ENCODE measurements at regions of chr2 and their contacts with region 1.

Region 1: DNA sequence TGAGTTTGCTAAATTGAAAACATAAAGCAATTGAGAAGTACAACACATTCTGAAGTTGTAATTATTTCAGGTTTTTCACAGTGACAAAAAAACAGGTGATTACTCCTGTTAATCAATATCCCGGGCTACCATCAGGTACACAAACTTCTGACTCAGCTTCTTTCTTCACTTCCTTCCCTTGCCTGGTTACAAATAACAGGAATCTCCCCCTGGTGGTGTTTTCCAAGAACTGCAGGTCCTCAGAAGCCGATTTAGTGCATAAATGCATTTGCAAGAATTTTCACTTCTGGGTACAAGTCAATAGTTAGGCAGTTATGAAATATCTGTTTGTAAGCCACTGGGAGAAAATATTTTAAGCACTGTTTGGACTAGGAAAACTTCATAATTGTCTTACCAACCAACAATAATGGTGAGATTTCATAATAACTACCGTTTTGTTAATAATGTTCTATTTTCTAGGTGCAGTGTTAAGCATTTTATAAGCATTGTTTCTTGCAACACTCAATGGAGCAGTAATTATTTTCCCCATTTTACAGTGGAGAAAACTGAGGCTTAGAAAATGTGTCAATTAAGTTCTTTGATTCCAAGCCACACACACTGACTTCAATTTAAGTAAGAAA is 12.4 kb upstream of the GMCL1 start:
- DNase-seq: peak in 1 of 2 donors; percentile 82
- ATAC-seq: peak in 7 of 8 donors; percentile 47 to 83 (median 65)
- H3K4me3 ChIP-seq: no peak overlapping the region
- H3K27ac ChIP-seq: peak overlapping the region in 1 of 10 donors; percentile 11
- H3K4me1 ChIP-seq: peaks cover 0 to 26% (median 0%) of the 10 kb centered on the region in 9 donors
- H3K27me3 ChIP-seq: no peaks in the 10 kb centered on the region
- CTCF ChIP-seq: peak; percentile 84 to 95 (median 92)

Region 2: GRCh38 chr2:69559442-69560146 is 257.4 kb before region 1 on chr2:
- intact Hi-C with region 1: loop called in 7 of 10 experiments (anchors 5 to 10 kb)
- DNase-seq: no peak
- ATAC-seq: peak; percentile 71 to 84 (median 76)
- H3K4me3 ChIP-seq: no peak overlapping the region
- H3K27ac ChIP-seq: peak overlapping the region in 2 of 10 donors; percentile 4 to 10
- H3K4me1 ChIP-seq: peaks cover 11 to 76% (median 44%) of the 10 kb centered on the region in 9 donors
- H3K27me3 ChIP-seq: no peaks in the 10 kb centered on the region
- CTCF ChIP-seq: peak in 8 of 9 donors; percentile 44 to 81 (median 72)

Region 3: GRCh38 chr2:69565431-69565839 is 251.6 kb before region 1 on chr2:
- intact Hi-C with region 1: loop called in 1 of 10 experiments (anchors 10 kb)
- DNase-seq: peak; percentile 48 to 58
- ATAC-seq: peak; percentile 33 to 66 (median 50)
- H3K4me3 ChIP-seq: no peak overlapping the region
- H3K27ac ChIP-seq: peak overlapping the region in 2 of 10 donors; percentile 30 to 50
- H3K4me1 ChIP-seq: peaks cover 9 to 88% (median 50%) of the 10 kb centered on the region in 9 donors
- H3K27me3 ChIP-seq: no peaks in the 10 kb centered on the region
- CTCF ChIP-seq: peak; percentile 24 to 88 (median 72)

Region 4: DNA sequence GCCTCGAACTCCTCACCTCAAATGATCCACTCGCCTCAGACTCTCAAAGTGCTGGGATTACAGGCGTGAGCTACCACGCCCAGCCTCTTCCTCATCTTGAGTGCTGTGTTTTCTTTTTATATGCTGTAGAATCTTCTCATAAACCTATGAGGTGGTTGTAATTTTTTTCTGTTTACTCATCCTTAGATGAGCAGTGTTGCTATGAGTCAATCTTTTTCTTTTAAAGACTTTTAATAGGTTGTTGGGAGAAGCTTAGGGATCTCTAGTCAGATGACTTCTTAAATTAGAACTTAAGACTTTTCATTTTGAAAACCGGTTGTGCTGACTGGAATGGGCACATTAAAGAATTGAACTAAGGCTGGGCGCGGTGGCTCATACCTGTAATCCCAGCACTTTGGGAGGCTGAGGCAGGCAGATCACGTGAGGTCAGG is 164.8 kb before region 1 on chr2:
- intact Hi-C with region 1: no loop called
- DNase-seq: no peak
- ATAC-seq: no peak
- H3K4me3 ChIP-seq: no peak overlapping the region
- H3K27ac ChIP-seq: no peak overlapping the region
- H3K4me1 ChIP-seq: peaks cover 0 to 21% (median 0%) of the 10 kb centered on the region in 9 donors
- H3K27me3 ChIP-seq: no peaks in the 10 kb centered on the region
- CTCF ChIP-seq: no peak

Region 5: GRCh38 chr2:69724540-69725159 is 92.4 kb before region 1 on chr2:
- intact Hi-C with region 1: loop called (anchors 1 to 5 kb)
- DNase-seq: peak; percentile 82 to 84
- ATAC-seq: peak; percentile 72 to 92 (median 88)
- H3K4me3 ChIP-seq: peak overlapping the region in 7 of 10 donors; percentile 24 to 49 (median 37)
- H3K27ac ChIP-seq: no peak overlapping the region
- H3K4me1 ChIP-seq: peaks cover 0 to 8% (median 0%) of the 10 kb centered on the region in 9 donors
- H3K27me3 ChIP-seq: no peaks in the 10 kb centered on the region
- CTCF ChIP-seq: peak; percentile 94 to 97 (median 95)

Region 6: DNA sequence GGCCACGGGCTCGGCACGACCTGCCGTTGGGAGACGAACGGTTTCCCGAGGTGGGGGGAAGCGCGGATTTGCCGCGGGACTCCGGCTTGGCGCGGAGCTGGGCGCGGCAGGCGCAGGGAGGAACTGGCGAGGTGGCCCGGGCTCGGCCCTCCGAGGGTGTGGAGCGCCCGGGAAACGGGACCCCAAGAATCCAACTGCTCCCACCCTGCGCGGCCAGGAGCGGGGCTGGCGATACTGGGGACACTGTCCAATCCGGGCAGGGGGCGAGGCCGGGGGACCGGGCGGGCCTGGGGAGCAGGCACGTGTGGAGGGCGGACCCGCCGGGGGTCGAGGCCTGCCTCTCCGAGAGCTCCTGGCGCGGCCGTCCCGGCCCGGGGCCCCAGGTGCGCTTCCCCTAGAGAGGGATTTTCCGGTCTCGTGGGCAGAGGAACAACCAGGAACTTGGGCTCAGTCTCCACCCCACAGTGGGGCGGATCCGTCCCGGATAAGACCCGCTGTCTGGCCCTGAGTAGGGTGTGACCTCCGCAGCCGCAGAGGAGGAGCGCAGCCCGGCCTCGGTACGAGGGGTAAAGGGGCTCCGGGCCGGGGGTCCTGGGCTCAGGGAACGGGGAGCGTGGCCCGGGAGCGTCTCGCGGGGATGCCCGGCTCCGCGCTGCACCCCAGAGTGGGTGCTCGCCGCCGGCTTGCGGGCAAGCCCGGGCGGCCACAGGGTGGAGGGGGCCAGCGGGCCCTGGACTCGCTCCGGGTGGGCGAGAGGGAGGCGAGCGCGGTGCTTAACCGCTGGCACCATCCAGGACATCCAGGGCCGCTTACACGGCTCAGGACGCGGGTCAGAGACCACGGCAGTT is 75.2 kb before region 1 on chr2 and contains the start of gene ANXA4:
- intact Hi-C with region 1: loop called in 3 of 10 experiments (anchors 5 kb)
- DNase-seq: peak; percentile 76 to 83
- ATAC-seq: peak; percentile 91 to 96 (median 94)
- H3K4me3 ChIP-seq: peak within 1 kb of the TSS; percentile 71 to 100 (median 91)
- H3K27ac ChIP-seq: peak within 1 kb of the TSS; percentile 81 to 96 (median 94)
- H3K4me1 ChIP-seq: peaks cover 0 to 46% (median 15%) of the 10 kb centered on the region in 9 donors
- H3K27me3 ChIP-seq: no peaks in the 10 kb centered on the region
- CTCF ChIP-seq: no peak
- total RNA-seq, gene ANXA4: 17.9 to 36.7 (median 26.2) TPM

Region 7: GRCh38 chr2:69767034-69767433 is 50.0 kb before region 1 on chr2:
- intact Hi-C with region 1: loop called in 1 of 10 experiments (anchors 10 kb)
- DNase-seq: no peak
- ATAC-seq: peak in 1 of 8 donors; percentile 12
- H3K4me3 ChIP-seq: no peak overlapping the region
- H3K27ac ChIP-seq: peak overlapping the region in 3 of 10 donors; percentile 5 to 46 (median 13)
- H3K4me1 ChIP-seq: peaks cover 0 to 62% (median 34%) of the 10 kb centered on the region in 9 donors
- H3K27me3 ChIP-seq: no peaks in the 10 kb centered on the region
- CTCF ChIP-seq: peak in 2 of 9 donors; percentile 11 to 18

Region 8: GRCh38 chr2:70062268-70062667 is 245.2 kb after region 1 on chr2:
- intact Hi-C with region 1: no loop called
- DNase-seq: no peak
- ATAC-seq: no peak
- H3K4me3 ChIP-seq: no peak overlapping the region
- H3K27ac ChIP-seq: no peak overlapping the region
- H3K4me1 ChIP-seq: peaks cover 0 to 5% (median 0%) of the 10 kb centered on the region in 9 donors
- H3K27me3 ChIP-seq: no peaks in the 10 kb centered on the region
- CTCF ChIP-seq: no peak